SK-N-SH (cell line): ENCODE measurements at regions of chr3 and their contacts with region 1.

Region 1: GRCh38 chr3:12984023-12984823 is 89.0 kb downstream of the IQSEC1 start:
- DNase-seq: peak; percentile 80
- H3K4me3 ChIP-seq: peak overlapping the region in 1 of 2 experiments; percentile 7; a peak in 1 of 4 replicates
- H3K27ac ChIP-seq: no peak overlapping the region; a peak in 1 of 4 replicates
- H3K4me1 ChIP-seq: peaks cover 0 to 27% of the 10 kb centered on the region in 2 experiments; a peak in 1 of 4 replicates
- H3K27me3 ChIP-seq: no peaks in the 10 kb centered on the region
- CTCF ChIP-seq: peak; percentile 77
- EP300 ChIP-seq: no peak
- RAD21 ChIP-seq: peak; percentile 84

Region 2: DNA sequence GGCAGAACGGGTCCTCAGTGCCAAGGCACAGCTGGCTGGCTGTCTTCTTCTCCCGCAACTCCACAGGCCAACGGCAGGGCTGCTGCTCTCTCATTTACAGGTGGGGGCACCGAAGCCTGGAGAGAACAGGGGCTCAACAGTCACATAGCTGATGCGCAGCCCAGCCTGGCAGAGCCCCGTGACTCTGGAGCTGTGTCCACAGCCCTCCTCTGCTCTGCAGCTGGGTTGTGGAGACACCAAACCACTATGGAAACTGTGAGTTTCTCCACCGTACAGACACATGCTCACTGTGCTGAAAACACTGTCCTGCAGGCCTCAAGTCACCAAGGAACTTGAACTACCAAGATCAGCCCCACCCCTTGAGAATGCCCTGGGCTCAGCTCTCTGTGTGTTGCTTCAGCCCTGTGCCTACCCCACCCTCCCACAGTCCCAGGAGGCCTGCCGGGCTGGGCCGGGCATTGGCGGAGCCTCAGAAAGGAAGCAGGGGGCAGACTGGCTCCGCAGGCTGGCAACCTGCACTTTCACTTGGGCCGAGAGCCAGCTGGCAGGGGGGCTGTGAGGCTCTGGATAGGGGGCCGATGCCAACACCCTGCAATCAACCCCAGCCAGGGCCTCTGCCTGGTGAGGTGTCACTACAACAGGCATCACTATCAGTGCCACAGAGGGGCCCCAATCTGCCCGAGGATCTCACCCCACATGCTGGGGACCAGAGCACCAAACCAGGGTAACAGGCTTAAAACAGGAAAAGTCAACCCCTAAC is 29.2 kb before region 1 on chr3:
- CTCF ChIA-PET with region 1: interaction called, 32 read pairs
- POLR2A ChIA-PET with region 1: no interaction called
- DNase-seq: peak; percentile 88
- H3K4me3 ChIP-seq: no peak overlapping the region; a peak in 1 of 4 replicates
- H3K27ac ChIP-seq: peak overlapping the region; percentile 24 to 77; a peak in 3 of 4 replicates
- H3K4me1 ChIP-seq: peaks cover 15 to 52% of the 10 kb centered on the region in 2 experiments; a peak in 2 of 4 replicates
- H3K27me3 ChIP-seq: no peaks in the 10 kb centered on the region
- CTCF ChIP-seq: no peak
- EP300 ChIP-seq: peak in 1 of 2 experiments; percentile 50; a peak in 1 of 4 replicates
- RAD21 ChIP-seq: peak; percentile 59